ENCODE measurements at regions of chr19 and their contacts with region 1.

Region 1: GRCh38 chr19:11798391-11799330 is at the start of gene ZNF491:
- DNase-seq: peak; percentile 96
- CTCF ChIP-seq: peak; percentile 28

Region 2: GRCh38 chr19:11787536-11787935 is 11.1 kb before region 1 on chr19:
- CTCF ChIA-PET with region 1: interaction called, 10 read pairs
- POLR2A ChIA-PET with region 1: no interaction called
- DNase-seq: no peak
- CTCF ChIP-seq: no peak

Region 3: GRCh38 chr19:11848594-11849469 is 50.2 kb after region 1 on chr19 and contains the start of gene ZNF439:
- CTCF ChIA-PET with region 1: interaction called, 11 read pairs
- POLR2A ChIA-PET with region 1: no interaction called
- DNase-seq: peak; percentile 92
- CTCF ChIP-seq: no peak

Region 4: GRCh38 chr19:11987405-11988281 is 189.0 kb after region 1 on chr19:
- CTCF ChIA-PET with region 1: interaction called, 47 read pairs
- POLR2A ChIA-PET with region 1: interaction called, 13 read pairs
- DNase-seq: peak; percentile 92
- CTCF ChIP-seq: no peak

Region 5: GRCh38 chr19:12064590-12065538 is 266.2 kb after region 1 on chr19 and contains the start of gene ZNF844:
- CTCF ChIA-PET with region 1: interaction called, 16 read pairs
- POLR2A ChIA-PET with region 1: no interaction called
- DNase-seq: peak; percentile 93
- CTCF ChIP-seq: no peak

Region 6: DNA sequence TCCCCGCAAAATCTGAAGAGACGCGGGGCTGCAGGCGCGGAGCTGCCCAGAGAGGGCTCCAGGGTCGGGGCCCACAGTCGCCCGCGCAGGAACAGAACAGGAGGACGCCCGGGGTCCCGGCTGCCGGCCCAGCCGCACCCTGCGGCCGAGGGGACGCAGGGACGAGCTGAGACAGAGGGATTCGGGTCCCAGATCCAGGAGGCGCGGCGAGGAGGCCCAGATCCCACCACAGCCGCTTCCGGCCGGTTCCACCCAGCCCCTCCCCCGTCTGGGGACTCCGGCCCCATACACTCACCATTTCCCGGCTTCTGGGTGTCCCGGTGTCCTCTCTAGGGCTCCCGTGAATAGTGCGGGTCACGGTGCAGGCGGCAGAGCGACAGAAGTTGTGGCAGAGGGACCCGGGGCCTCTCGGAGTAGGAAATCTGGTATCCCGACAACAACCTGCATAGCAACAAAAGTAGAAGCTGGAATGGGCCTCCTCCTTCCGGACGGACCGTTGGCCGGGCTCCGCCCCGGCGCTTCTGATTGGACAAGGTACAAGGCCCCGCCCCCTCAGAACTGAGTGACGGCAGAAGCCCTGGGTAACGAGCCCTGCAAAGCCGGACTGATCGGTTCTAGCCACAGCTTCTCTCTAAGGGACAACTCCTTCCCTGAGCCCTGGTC is 341.4 kb after region 1 on chr19 and contains the start of gene ZNF20:
- CTCF ChIA-PET with region 1: interaction called, 29 read pairs
- POLR2A ChIA-PET with region 1: no interaction called
- DNase-seq: peak; percentile 96
- CTCF ChIP-seq: peak; percentile 5

Measured in GM10248 (cell line).